ENCODE measurements at regions of chr20 and their contacts with region 1.

Region 1: DNA sequence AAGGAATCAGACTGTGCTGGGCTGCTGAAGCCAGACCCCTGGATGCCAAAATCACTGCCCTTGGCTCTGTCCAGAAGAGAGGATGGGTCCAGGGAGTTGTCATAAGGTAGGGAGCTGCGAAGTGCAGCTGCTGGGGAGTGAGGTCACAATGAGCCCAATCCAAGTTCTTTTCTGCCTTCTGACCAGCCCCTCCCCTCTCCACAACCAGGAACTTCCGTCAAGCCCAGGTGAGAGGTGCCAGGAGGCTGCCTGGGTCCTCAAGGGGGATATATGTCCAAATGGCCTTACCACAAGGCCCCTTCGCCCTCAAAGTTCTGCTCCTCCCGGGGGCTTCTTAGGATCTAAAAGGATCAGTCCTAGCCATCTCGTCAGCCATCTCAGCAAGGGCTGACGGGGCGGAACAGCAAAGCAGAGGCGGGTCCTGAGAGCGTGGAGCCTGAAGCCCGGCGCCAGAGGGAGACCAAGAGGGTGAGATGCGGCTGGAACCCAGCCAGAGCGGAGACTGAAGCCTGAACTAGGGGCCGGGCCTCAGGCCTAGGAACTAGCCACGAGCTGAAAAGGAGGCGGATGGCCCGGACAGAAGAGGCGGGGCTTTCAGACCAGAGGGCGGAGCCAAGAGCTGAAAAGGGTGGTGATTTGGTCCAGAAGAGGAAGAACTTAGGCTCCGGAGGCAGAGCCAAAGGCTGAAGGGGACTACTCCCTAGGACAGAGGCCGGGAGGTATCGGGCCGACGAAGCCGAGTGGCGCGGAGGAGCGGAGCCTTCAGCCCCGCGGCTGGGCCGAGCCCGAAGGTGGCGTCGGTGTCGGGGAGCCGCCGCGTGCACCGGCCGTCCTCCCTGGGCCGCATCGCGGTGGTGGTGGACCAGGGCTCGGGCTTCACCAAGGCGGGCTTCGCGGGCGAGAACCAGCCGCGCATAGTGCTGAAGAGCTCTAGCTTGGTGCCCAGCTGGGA is at the start of gene ACTL10:
- DNase-seq: peak; percentile 95
- H3K4me3 ChIP-seq: peak within 1 kb of the TSS; percentile 52 to 67
- H3K27ac ChIP-seq: peak within 1 kb of the TSS; percentile 60 to 79
- H3K4me1 ChIP-seq: peaks cover 19% of the 10 kb centered on the region
- H3K27me3 ChIP-seq: no peaks in the 10 kb centered on the region
- CTCF ChIP-seq: no peak
- POLR2A ChIP-seq: peak; percentile 64
- total RNA-seq, gene ACTL10: 26.6 to 55.0 TPM

Region 2: GRCh38 chr20:33731693-33732165 is 65.2 kb after region 1 on chr20 and contains the start of gene ZNF341:
- intact Hi-C with region 1: loop called (anchors 5 kb)
- DNase-seq: peak; percentile 91
- H3K4me3 ChIP-seq: peak within 1 kb of the TSS; percentile 54 to 72
- H3K27ac ChIP-seq: peak within 1 kb of the TSS; percentile 84 to 95
- H3K4me1 ChIP-seq: peaks cover 12% of the 10 kb centered on the region
- H3K27me3 ChIP-seq: no peaks in the 10 kb centered on the region
- CTCF ChIP-seq: peak; percentile 89 to 95 (median 93)
- POLR2A ChIP-seq: no peak
- total RNA-seq, gene ZNF341: 7.0 to 8.7 TPM

Region 3: GRCh38 chr20:34111702-34112599 is 445.4 kb after region 1 on chr20 and contains the start of gene EIF2S2:
- intact Hi-C with region 1: no loop called
- DNase-seq: peak; percentile 97
- H3K4me3 ChIP-seq: peak within 1 kb of the TSS; percentile 90 to 94
- H3K27ac ChIP-seq: peak within 1 kb of the TSS; percentile 93 to 95
- H3K4me1 ChIP-seq: peaks cover 31% of the 10 kb centered on the region
- H3K27me3 ChIP-seq: no peaks in the 10 kb centered on the region
- CTCF ChIP-seq: peak in 1 of 3 experiments; percentile 6
- POLR2A ChIP-seq: peak; percentile 92
- total RNA-seq, gene EIF2S2: 41.9 to 45.4 TPM